ENCODE measurements at regions of chr16 and their contacts with region 1.

Region 1: GRCh38 chr16:19542138-19542821 is 13.2 kb upstream of the VPS35L start:
- DNase-seq: no peak
- H3K4me3 ChIP-seq: no peak overlapping the region
- H3K27me3 ChIP-seq: no peaks in the 10 kb centered on the region
- CTCF ChIP-seq: no peak

Region 2: GRCh38 chr16:19446300-19446846 is 95.9 kb before region 1 on chr16:
- CTCF ChIA-PET with region 1: no interaction called
- POLR2A ChIA-PET with region 1: no interaction called
- DNase-seq: no peak
- H3K4me3 ChIP-seq: no peak overlapping the region
- H3K27me3 ChIP-seq: no peaks in the 10 kb centered on the region
- CTCF ChIP-seq: no peak

Region 3: DNA sequence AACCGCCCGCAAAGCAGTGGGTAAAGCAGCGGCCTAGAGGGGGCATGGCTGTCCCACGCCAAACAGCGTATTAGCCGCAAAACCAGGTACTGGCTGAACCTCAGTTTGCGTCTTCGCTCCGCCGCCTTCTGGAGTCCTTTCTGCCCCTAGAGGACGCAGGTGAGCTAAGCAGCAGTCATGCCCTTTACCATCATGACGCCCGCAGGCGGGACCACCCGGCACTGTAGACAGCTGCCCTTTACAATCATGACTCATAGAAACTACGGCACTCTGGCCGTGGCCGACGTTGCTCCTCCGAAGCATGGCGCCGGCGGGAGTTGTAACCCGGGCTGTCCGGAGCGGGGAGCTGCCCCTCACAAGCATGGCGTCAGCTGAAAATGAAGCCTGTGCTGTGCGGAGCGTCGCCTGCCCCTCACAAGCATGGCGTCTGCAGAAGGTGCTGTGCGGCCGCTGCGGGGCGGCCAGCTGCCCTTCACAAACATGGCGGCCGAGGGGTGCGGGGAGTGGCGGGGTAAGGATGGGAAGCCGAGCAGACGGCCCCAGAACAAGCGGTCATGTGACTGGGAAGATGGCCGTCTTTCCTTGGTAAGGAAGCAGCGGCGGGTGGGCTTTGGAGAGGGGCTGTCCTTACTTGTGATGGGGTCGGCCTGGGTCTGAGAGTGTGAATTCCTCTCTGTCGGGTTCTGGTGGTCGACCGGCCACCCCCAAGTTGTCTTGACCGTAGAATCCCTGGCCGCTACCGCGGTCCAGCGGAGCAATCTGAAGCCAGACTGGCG is 13.1 kb after region 1 on chr16 and contains the start of gene VPS35L:
- CTCF ChIA-PET with region 1: interaction called, 14 read pairs
- POLR2A ChIA-PET with region 1: no interaction called
- DNase-seq: peak; percentile 94
- H3K4me3 ChIP-seq: peak within 1 kb of the TSS; percentile 72
- H3K27me3 ChIP-seq: no peaks in the 10 kb centered on the region
- CTCF ChIP-seq: peak; percentile 83
- polyA plus RNA-seq, gene VPS35L: 40.1 and 83.2 TPM in 2 replicates

Measured in BJ (cell line).